Activated T-helper 1 cell treated with anti-CD3 and anti-CD28 coated beads, Interleukin-12 subunit alpha, Interleukin-12 subunit beta, Interleukin-2, Interleukin-4 antibody, amounts not matched to agents 30 ng/mL and 10 ng/mL and 1 ng/mL, durations not matched to agents 14 hours and 24 hours and 36 hours (primary cell): ENCODE measurements at regions of chr20 and their contacts with region 1.

Region 1: GRCh38 chr20:4720041-4720976 is 1.4 kb upstream of the PRND start:
- DNase-seq: peak; percentile 58
- H3K4me3 Mint-ChIP-seq: no peak overlapping the region
- H3K27ac Mint-ChIP-seq: no peak overlapping the region
- H3K4me1 Mint-ChIP-seq: peaks cover 9% of the 10 kb centered on the region
- H3K27me3 Mint-ChIP-seq: peaks cover 13% of the 10 kb centered on the region

Region 2: DNA sequence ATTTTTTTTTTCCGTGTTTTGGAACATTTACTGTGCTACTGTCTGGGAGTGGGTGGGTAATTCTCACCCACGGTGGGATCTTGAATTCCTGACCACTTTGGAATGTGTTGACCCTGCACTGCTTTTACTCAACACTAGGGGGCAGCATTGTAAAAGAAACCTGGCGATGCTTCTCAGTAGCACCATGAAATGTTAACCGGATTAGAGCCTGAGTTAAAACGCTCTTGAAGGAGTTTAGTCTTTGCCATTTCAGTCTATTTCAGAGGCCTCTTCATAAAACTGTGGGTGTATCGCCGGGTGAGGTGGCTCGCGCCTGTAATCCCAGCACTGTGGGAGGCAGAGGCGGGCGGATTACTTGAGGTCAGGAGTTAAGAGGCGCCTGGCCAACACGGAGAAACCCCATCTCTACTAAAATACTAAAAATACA is 113.0 kb before region 1 on chr20:
- intact Hi-C with region 1: loop called (anchors 1 kb)
- DNase-seq: peak; percentile 40
- H3K4me3 Mint-ChIP-seq: no peak overlapping the region
- H3K27ac Mint-ChIP-seq: no peak overlapping the region
- H3K4me1 Mint-ChIP-seq: peaks cover 5% of the 10 kb centered on the region
- H3K27me3 Mint-ChIP-seq: peaks cover 26% of the 10 kb centered on the region

Region 3: GRCh38 chr20:4613718-4614620 is 106.3 kb before region 1 on chr20:
- intact Hi-C with region 1: loop called (anchors 1 kb)
- DNase-seq: peak; percentile 28
- H3K4me3 Mint-ChIP-seq: no peak overlapping the region
- H3K27ac Mint-ChIP-seq: no peak overlapping the region
- H3K4me1 Mint-ChIP-seq: peaks cover 10% of the 10 kb centered on the region
- H3K27me3 Mint-ChIP-seq: peaks cover 12% of the 10 kb centered on the region

Region 4: DNA sequence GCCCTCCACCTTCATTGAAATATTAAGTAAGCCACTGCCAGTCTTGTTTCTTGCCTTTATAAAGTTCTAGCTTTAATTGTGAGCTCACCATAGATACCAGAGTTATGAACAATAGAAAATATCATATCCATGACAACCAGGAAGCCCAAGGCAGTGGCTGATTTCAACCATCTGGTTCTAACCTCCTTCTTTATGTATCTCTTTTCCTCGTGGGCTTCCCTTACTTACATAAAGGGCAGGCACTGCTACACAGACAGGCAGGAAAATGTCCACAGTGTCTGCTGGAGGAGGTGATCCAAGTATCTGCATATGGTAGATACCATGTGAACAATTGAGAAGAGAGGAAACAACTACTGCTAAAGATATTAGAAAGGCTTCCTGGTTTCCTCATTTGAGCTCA is 63.8 kb before region 1 on chr20:
- intact Hi-C with region 1: no loop called
- DNase-seq: no peak
- H3K4me3 Mint-ChIP-seq: no peak overlapping the region
- H3K27ac Mint-ChIP-seq: no peak overlapping the region
- H3K4me1 Mint-ChIP-seq: peaks cover 11% of the 10 kb centered on the region
- H3K27me3 Mint-ChIP-seq: peaks cover 20% of the 10 kb centered on the region